ENCODE measurements at regions of chr12 and their contacts with region 1.

Region 1: GRCh38 chr12:92145731-92146496 is at the start of gene BTG1:
- DNase-seq: peak; percentile 100
- H3K4me3 Mint-ChIP-seq: peak within 1 kb of the TSS; percentile 89
- H3K27ac Mint-ChIP-seq: peak within 1 kb of the TSS; percentile 74
- H3K4me1 Mint-ChIP-seq: peaks cover 16% of the 10 kb centered on the region
- H3K27me3 Mint-ChIP-seq: no peaks in the 10 kb centered on the region
- CTCF ChIP-seq: no peak
- total RNA-seq, gene BTG1: 128 and 129 TPM in 2 replicates

Region 2: GRCh38 chr12:91413581-91414546 is 732.0 kb before region 1 on chr12:
- CTCF ChIA-PET with region 1: no interaction called
- POLR2A ChIA-PET with region 1: interaction called, 18 read pairs
- intact Hi-C with region 1: no loop called
- DNase-seq: peak; percentile 85
- H3K4me3 Mint-ChIP-seq: no peak overlapping the region
- H3K27ac Mint-ChIP-seq: peak overlapping the region; percentile 66
- H3K4me1 Mint-ChIP-seq: peaks cover 16% of the 10 kb centered on the region
- H3K27me3 Mint-ChIP-seq: no peaks in the 10 kb centered on the region
- CTCF ChIP-seq: no peak

Region 3: DNA sequence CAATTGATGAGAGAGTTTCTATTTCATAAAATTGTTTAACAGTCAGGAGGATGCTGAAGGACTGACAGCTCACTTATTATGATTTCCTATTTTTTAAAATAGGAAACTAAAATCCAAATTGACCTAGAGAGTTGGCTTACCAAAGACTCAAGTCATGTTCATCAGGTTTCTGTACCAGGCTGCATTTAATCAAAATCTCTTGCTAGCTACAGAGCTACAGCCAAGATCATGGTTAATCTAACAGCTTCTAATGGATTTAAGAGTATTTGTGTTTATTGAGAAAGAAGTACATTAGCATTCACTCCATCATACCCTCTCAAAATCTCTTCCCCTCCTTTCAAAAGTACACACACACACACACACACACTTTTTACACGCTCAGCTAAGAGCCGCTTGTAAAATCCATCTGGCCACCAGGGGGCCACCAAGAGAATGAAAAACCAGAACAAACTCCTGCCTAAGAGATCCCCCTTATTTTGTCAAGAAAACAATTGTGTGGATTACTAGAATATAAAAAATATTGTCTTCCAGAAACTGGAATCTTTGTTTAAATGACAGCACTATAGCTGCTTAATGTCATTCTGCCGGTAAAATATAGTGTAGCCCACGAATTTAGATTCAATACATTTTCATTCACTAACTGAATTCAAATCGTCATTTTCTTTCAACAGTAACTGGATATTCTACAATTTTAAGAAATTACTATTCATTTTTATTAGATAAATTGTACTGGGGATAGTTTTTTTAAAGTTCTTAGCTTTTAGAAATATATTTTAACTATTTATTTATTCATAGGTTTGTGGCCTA is 334.2 kb before region 1 on chr12:
- CTCF ChIA-PET with region 1: interaction called, 7 read pairs
- POLR2A ChIA-PET with region 1: interaction called, 222 read pairs
- intact Hi-C with region 1: loop called (anchors 1 kb)
- DNase-seq: peak; percentile 61
- H3K4me3 Mint-ChIP-seq: no peak overlapping the region
- H3K27ac Mint-ChIP-seq: peak overlapping the region; percentile 43
- H3K4me1 Mint-ChIP-seq: peaks cover 11% of the 10 kb centered on the region
- H3K27me3 Mint-ChIP-seq: no peaks in the 10 kb centered on the region
- CTCF ChIP-seq: peak; percentile 57

Region 4: DNA sequence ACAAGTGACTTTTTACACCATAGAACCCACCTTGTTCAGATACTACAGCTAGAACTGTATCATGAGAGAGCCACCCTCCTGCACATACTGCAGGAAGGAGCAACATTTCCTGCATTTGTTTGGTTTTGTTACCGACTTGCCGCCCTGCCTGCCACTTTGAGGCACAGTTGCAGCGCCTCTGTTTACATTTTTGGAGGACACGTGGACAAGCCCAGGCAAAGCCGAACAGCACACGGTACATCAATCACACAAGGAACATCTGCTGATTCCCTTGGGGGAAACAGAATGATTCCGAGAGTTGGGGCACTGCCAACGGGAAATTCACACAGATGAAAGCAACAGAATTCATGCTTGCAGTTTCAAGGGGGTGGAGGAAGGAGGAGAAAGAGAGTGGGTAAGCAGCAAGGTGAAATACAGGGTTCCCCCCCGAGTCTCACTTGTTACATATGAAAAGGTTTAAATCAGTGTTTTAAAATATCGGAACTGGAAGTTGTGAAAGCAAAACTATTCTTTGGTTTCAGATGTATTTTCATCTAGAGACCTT is 111.0 kb before region 1 on chr12:
- CTCF ChIA-PET with region 1: no interaction called
- POLR2A ChIA-PET with region 1: interaction called, 37 read pairs
- intact Hi-C with region 1: no loop called
- DNase-seq: peak; percentile 95
- H3K4me3 Mint-ChIP-seq: peak overlapping the region; percentile 76
- H3K27ac Mint-ChIP-seq: peak overlapping the region; percentile 96
- H3K4me1 Mint-ChIP-seq: peaks cover 53% of the 10 kb centered on the region
- H3K27me3 Mint-ChIP-seq: no peaks in the 10 kb centered on the region
- CTCF ChIP-seq: no peak

Region 5: DNA sequence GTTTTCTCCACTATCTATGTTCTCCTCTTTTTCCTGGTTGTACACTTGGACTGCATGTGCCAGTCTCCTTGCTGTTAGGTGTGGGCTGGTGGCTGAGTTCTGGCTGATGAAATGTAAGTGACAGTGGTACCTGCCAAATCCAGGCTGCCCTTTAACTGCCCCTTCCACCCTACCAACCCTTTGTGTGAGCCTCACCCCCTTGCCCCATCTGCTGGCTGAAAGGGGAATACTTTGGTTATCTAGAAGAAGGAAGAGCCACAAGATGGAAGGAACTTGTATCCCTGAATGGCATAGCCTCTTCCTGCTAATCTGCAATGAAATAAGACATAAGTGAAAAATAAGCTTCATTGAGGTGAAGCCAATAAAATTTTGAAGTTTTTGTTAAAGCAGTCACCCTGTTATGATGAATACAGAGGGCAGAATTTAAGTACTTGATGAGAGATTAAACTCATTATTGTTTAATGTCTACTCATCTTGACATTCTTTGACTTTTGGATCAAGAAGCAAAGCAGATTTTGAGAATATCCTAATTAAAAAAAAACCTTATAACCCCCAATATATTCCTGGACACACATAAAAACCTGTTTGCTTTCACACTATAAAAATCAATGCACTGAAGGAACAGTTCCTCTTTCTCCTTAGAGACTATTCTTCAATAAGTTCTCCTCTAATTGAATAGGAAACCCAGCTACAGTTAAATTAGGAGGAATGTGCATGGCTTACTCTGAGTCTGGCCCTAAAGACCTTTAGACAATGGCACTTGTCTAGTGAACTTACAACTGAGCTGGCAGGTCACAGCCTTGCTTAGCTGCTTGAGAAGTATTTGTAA is 262.4 kb after region 1 on chr12:
- CTCF ChIA-PET with region 1: interaction called, 4 read pairs
- POLR2A ChIA-PET with region 1: interaction called, 16 read pairs
- intact Hi-C with region 1: loop called (anchors 1 kb)
- DNase-seq: peak; percentile 68
- H3K4me3 Mint-ChIP-seq: no peak overlapping the region
- H3K27ac Mint-ChIP-seq: no peak overlapping the region
- H3K4me1 Mint-ChIP-seq: no peaks in the 10 kb centered on the region
- H3K27me3 Mint-ChIP-seq: no peaks in the 10 kb centered on the region
- CTCF ChIP-seq: peak; percentile 48

Region 6: DNA sequence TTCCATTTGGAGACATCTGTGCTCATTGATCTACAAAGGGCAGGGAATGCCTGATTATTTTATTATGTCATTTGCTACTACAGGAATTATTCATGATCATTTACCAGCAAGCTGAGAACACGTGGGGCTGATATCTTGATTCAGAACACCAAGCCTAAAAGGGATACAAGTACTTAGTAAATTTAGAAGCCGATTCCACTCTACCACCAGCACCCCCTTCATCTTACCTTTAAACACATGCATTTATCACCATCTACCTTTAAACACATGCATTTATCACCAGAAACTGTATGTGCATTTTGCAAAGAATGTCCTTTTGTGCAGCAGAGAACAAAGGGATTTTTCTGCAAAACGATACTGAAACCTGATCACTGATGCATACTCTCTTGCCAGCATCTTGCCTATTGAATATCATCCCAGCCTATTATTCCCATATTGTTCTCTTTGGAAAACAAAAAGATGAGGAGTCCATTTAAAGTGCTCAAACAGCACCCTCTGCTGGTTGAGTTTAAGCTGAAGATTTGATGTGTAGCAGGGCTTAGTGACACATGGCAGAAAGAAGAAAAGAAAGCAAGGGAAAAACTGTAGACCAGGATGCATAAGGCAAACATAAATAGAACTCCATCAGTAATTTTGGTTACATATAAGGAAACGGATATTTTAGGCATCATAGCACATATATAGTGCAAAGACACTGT is 424.3 kb after region 1 on chr12:
- CTCF ChIA-PET with region 1: interaction called, 13 read pairs
- POLR2A ChIA-PET with region 1: interaction called, 124 read pairs
- intact Hi-C with region 1: loop called (anchors 1 kb)
- DNase-seq: peak; percentile 89
- H3K4me3 Mint-ChIP-seq: no peak overlapping the region
- H3K27ac Mint-ChIP-seq: no peak overlapping the region
- H3K4me1 Mint-ChIP-seq: no peaks in the 10 kb centered on the region
- H3K27me3 Mint-ChIP-seq: no peaks in the 10 kb centered on the region
- CTCF ChIP-seq: peak; percentile 71

Region 7: GRCh38 chr12:92899388-92900001 is 753.6 kb after region 1 on chr12:
- CTCF ChIA-PET with region 1: no interaction called
- POLR2A ChIA-PET with region 1: no interaction called
- intact Hi-C with region 1: no loop called
- DNase-seq: peak; percentile 98
- H3K4me3 Mint-ChIP-seq: peak overlapping the region; percentile 73
- H3K27ac Mint-ChIP-seq: peak overlapping the region; percentile 72
- H3K4me1 Mint-ChIP-seq: peaks cover 16% of the 10 kb centered on the region
- H3K27me3 Mint-ChIP-seq: no peaks in the 10 kb centered on the region
- CTCF ChIP-seq: no peak